Right ventricle myocardium inferior (tissue), 1 donor: ENCODE measurements at regions of chr16 and their contacts with region 1.

Region 1: DNA sequence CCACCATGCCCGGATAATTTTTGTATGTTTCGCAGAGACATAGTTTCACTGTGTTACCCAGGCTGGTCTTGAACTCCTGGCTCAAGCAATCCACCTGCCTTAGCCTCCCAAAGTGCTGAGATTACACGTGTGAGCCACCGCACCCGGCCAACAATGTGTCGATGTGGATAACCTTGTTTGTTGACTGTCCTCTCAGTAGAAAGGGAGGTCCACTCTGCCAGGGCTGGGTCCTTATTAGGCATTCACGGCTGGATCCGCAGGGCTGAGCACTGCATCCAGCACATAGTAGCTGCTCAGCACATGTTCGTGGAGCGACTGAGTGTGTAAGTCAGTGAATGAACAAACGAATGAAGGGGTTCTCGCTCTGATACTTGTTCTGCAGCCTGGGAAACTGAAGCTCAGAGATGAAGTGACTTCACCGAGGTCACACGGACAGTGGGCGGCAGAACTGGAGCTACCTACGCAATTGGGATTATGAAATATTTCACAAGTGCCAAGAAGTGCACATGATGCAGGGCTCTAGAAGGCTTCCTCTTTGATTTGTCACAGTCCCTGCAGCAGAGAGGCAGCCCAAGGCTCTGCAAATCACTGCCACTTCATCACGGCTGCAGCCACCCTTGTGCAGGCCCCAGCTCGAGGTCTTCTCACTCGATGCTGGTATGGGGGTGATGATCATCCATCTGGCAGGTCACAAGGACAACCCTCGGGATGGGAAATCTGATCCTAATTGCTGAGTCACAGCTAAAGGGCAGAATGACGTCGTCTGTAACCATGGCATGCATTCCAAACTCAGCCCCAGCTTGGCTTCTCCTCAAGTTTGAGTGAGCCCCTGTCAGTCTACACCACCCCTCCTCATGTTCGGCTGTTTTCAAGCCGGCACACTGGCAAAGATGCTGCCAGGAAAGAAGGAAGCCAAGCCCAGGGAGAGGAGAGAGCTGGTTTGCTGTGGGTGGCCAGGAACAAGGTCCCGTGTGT is 28.0 kb upstream of the SNN start:
- DNase-seq: peak; percentile 89
- ATAC-seq: peak; percentile 96

Region 2: DNA sequence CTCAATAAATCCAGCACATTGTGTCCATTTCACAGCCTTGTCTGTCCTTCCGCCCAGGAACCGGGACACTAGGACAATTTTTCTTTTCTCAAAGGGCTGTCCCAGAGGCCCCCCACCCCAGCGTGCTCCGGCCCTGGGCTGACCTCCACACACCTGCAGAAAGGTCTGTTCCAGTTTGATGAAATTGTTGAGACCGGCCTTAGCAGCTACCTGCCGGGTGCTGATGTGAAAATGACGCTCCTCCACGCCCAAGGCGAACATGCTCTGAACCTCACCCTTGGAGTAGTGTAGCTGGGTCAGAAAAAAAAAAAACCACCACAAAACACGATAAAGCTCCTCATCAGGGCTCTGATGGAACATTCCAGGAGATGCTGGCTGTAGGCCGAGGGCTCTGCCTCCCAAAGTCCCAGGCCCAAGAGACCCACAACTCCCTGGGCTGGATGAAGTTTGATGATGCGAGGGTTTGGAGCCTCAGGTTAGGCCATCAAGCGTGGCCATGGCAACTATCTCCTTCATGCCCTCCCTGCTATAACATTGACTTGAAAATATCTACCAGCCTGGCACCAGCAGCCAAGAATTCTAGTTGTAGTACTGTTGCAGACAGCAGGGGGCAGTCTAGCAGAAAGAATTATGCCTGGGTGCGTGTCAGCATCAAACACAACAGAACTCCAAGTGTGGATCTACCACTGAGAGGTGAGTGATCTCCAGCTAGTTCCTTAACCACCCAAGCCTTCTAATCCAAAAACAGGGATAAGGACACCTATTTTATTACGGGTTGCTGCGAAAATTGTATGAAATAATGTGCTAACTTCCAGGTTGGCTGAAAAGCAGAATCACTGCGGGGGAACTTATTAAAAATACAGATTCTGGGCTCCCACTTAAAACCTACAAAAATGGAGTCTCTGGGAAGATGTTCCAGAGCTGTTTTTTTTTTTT is 232.9 kb before region 1 on chr16:
- intact Hi-C with region 1: loop called (anchors 2 kb)
- DNase-seq: no peak
- ATAC-seq: peak; percentile 45

Region 3: DNA sequence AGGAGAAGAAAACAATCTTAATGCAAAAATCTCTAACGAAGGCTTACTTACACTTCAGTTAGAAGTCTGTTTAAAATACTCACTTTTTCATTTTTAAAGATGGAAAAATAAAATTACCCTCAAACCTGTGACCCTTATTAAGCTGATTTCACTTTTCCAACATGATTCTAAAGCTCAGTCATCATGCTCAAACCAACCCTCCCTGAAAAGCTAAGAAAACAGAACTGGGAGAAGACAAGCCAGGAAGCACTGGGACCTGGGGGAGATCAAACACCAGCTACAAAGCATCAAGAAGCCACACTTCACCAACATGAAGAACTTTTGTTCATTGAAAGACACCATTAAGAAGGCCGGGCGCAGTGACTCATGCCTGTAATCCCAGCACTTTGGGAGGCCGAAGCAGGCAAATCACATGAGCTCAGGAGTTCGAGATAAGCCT is 142.3 kb before region 1 on chr16:
- intact Hi-C with region 1: loop called (anchors 1 kb)
- DNase-seq: no peak
- ATAC-seq: no peak

Region 4: DNA sequence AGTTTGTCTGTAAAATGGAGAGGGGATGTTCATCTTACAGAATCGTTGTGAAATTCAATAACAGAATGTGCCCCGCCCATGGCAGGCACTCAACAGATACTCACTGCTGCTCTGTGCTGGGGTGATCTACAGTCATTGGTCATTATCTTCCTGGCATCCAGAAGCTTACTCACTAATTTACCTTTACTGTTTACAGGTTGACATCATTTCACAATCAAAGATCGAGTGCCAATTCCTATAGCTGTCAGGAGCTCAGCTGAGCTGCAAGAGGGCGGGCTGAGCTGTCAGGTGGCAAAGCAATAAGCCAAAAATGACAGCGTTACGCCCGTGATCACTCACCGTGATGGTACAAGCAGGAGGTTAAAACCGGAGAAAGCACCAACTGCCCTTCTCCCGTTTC is 104.7 kb before region 1 on chr16:
- intact Hi-C with region 1: loop called (anchors 1 kb)
- DNase-seq: no peak
- ATAC-seq: no peak

Region 5: DNA sequence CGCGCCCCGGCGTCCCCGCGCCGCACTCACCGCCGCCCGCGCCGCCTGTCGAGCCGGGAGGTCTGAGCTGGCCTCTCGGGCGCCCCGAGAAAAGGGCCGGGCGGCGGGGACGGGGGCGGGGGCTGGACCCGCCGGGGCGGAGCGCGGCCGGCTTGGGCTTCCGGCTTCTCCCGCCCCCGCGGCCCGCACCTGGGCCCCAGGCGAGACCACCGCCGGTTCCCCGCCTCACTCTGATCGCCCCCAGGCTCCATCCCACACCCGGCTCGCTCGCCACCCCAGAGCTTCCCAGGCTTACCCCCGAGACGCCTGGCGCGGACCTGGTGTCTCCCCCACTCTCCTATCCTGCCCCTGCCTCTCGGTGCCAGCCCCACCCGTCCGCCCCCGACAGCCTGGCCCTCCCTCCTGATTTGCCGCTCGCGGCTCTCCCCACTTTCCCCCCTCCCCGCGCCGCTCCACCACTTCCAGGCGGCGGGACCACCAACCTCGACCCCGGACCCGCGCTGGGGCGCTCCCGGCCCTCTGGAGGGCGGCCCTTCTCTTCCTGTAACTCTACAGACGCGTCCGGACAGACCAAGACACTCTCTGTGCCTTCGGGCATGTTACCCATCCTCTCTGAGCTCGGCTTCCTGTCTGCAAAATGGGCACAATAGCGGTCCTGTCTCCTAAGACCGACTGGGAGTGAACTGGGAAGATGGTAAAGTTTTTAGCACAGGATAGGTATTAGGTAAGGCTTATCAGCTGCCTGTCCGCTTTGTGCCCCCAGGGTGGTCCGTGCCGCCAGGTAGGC is 53.2 kb before region 1 on chr16 and contains the start of gene LITAF:
- intact Hi-C with region 1: loop called (anchors 5 kb)
- DNase-seq: peak; percentile 87
- ATAC-seq: peak; percentile 88
- total RNA-seq, gene LITAF: 78.4 TPM

Region 6: DNA sequence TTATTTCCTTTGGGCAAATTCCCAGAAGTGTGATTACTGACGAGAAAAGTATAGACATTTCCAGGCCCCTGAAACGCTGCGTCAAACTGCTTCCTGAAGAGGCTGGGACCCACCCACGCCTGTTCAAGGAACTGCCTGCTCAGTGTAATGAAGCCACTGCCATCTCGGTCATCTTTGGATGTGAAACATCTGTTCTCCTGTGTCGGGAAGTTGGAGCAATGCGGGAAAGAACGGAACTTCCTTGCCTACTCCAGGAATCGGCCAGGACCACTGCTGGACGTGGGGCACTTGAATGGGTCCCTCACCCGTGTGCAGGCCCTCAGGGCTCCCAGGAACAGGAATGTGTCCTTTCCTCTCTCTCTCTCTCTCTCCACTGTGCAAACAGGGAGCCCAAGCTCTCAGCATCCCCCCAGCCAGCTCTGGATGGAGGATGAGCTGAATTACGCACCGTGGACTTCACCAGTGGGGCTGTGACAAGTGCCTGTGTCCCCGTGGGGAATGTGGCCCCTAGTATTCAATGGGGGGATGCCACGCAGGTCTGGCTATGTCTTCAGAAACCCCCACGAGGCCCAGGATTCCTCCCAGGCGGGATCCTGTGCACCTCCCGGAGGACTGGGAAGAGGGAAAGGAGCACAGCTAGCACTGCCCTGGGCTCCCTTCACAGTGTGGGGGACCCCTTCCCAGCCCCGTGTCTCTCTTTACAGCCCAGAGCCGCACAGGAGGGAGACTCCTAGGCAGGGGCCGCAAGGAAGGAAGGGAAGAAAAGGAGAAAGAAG is 35.2 kb before region 1 on chr16:
- intact Hi-C with region 1: loop called (anchors 5 kb)
- DNase-seq: peak; percentile 86
- ATAC-seq: peak; percentile 91

Region 7: GRCh38 chr16:11715246-11715947 is 75.2 kb after region 1 on chr16:
- intact Hi-C with region 1: loop called (anchors 1 kb)
- DNase-seq: no peak
- ATAC-seq: no peak